ENCODE measurements at regions of chr5 and their contacts with region 1.

Region 1: DNA sequence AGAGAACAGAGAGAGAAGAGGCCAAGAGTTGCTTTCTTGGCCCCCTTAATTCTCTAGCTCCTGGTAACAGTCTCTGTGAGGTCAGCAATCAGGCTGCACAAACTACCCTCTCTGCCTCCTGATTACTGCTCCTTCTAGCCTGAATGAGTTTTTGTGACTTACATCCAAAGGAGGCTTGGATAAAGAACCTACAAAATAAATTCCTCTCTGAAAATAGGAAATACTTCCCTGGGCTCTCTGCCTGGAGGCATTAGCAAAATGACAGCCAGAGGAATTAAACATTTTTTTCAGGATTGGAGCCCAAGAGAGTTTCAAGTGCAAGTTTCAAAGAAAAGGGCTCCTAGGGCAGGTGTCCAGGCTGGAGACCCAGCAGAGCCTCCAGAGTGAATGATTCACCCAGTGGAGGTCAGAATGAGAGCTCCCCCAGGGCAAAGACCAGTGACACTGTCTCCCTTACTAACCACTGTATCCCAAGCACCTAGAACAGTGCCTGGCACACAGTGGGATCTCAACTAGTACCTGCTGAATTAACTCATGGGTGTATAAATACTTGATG is 162.5 kb downstream of the SPOCK1 start:
- DNase-seq: no peak
- H3K4me3 Mint-ChIP-seq: no peak overlapping the region
- H3K27ac Mint-ChIP-seq: no peak overlapping the region
- H3K4me1 Mint-ChIP-seq: no peaks in the 10 kb centered on the region
- H3K27me3 Mint-ChIP-seq: no peaks in the 10 kb centered on the region

Region 2: GRCh38 chr5:137254119-137255090 is 82.2 kb before region 1 on chr5:
- CTCF ChIA-PET with region 1: no interaction called
- POLR2A ChIA-PET with region 1: no interaction called
- DNase-seq: no peak
- H3K4me3 Mint-ChIP-seq: no peak overlapping the region
- H3K27ac Mint-ChIP-seq: no peak overlapping the region
- H3K4me1 Mint-ChIP-seq: no peaks in the 10 kb centered on the region
- H3K27me3 Mint-ChIP-seq: no peaks in the 10 kb centered on the region

Region 3: GRCh38 chr5:137300411-137301240 is 36.0 kb before region 1 on chr5:
- CTCF ChIA-PET with region 1: no interaction called
- POLR2A ChIA-PET with region 1: no interaction called
- DNase-seq: no peak
- H3K4me3 Mint-ChIP-seq: no peak overlapping the region
- H3K27ac Mint-ChIP-seq: no peak overlapping the region
- H3K4me1 Mint-ChIP-seq: no peaks in the 10 kb centered on the region
- H3K27me3 Mint-ChIP-seq: peaks cover 11% of the 10 kb centered on the region

Region 4: GRCh38 chr5:137325730-137326129 is 10.9 kb before region 1 on chr5:
- CTCF ChIA-PET with region 1: interaction called, 12 read pairs
- POLR2A ChIA-PET with region 1: no interaction called
- DNase-seq: no peak
- H3K4me3 Mint-ChIP-seq: no peak overlapping the region
- H3K27ac Mint-ChIP-seq: no peak overlapping the region
- H3K4me1 Mint-ChIP-seq: no peaks in the 10 kb centered on the region
- H3K27me3 Mint-ChIP-seq: peaks cover 13% of the 10 kb centered on the region